ENCODE measurements at regions of chr10 and their contacts with region 1.

Region 1: DNA sequence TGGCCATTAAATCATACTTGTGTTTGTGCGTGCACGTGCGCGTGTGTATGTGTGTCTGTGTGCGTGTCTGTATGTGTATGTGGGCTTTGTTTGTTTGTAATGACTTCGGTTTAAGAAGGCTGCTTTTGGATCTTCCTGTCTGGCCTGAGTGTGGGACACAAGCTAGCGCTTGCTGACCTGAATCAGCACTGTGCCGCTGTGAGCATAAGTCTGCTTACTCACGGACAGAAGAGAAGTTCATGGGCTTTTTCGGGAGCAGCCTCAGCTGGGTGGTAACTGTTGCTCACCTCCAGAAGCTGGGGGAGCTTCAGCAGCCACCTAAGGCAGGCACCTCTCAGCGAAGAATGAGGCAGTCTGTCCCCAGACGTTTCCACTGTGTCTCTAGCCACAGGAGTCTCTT is 56.1 kb upstream of the TRUB1 start:
- DNase-seq: no peak
- H3K4me3 ChIP-seq: no peak overlapping the region
- H3K27ac ChIP-seq: no peak overlapping the region
- H3K4me1 ChIP-seq: no peaks in the 10 kb centered on the region
- H3K27me3 ChIP-seq: no peaks in the 10 kb centered on the region
- CTCF ChIP-seq: no peak

Region 2: GRCh38 chr10:114933588-114933987 is 51.7 kb after region 1 on chr10:
- CTCF ChIA-PET with region 1: no interaction called
- POLR2A ChIA-PET with region 1: interaction called, 10 read pairs
- intact Hi-C with region 1: no loop called
- DNase-seq: no peak
- H3K4me3 ChIP-seq: no peak overlapping the region
- H3K27ac ChIP-seq: no peak overlapping the region
- H3K4me1 ChIP-seq: no peaks in the 10 kb centered on the region
- H3K27me3 ChIP-seq: no peaks in the 10 kb centered on the region
- CTCF ChIP-seq: no peak

Region 3: GRCh38 chr10:115093286-115093775 is 211.4 kb after region 1 on chr10 and contains the start of gene ATRNL1:
- CTCF ChIA-PET with region 1: no interaction called
- POLR2A ChIA-PET with region 1: no interaction called
- intact Hi-C with region 1: no loop called
- DNase-seq: peak in 1 of 2 experiments; percentile 9
- H3K4me3 ChIP-seq: peak within 1 kb of the TSS; percentile 40; the same call in 1 of the 2 replicates
- H3K27ac ChIP-seq: no peak within 1 kb of the TSS
- H3K4me1 ChIP-seq: no peaks in the 10 kb centered on the region
- H3K27me3 ChIP-seq: no peaks in the 10 kb centered on the region
- CTCF ChIP-seq: no peak
- total RNA-seq, gene ATRNL1: not detected in 2 replicates

Region 4: DNA sequence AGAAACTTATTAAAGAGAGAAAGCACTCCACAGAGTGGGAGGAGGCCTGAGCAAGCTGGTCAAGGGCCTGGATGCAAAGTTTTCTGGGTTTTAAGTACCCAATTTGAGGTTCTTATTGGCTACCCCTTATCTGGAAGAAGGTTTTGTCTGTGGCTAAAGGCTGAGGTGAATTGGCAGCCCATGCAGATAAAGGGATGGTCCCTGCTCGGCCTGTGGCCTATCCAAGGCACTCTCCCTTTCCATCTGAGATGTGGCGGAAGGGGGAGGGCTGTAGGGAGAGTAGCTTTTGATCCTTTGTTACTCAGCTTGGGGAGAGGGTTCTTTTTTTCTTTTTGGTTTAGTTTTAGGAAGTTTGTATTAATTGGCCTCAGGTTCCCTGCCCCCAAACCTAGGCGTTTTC is 676.4 kb after region 1 on chr10:
- CTCF ChIA-PET with region 1: no interaction called
- POLR2A ChIA-PET with region 1: no interaction called
- intact Hi-C with region 1: no loop called
- DNase-seq: no peak
- H3K4me3 ChIP-seq: no peak overlapping the region
- H3K27ac ChIP-seq: no peak overlapping the region
- H3K4me1 ChIP-seq: no peaks in the 10 kb centered on the region
- H3K27me3 ChIP-seq: no peaks in the 10 kb centered on the region
- CTCF ChIP-seq: no peak